Prostate gland (tissue), 2 donors: ENCODE measurements at regions of chr1 and their contacts with region 1.

Region 1: DNA sequence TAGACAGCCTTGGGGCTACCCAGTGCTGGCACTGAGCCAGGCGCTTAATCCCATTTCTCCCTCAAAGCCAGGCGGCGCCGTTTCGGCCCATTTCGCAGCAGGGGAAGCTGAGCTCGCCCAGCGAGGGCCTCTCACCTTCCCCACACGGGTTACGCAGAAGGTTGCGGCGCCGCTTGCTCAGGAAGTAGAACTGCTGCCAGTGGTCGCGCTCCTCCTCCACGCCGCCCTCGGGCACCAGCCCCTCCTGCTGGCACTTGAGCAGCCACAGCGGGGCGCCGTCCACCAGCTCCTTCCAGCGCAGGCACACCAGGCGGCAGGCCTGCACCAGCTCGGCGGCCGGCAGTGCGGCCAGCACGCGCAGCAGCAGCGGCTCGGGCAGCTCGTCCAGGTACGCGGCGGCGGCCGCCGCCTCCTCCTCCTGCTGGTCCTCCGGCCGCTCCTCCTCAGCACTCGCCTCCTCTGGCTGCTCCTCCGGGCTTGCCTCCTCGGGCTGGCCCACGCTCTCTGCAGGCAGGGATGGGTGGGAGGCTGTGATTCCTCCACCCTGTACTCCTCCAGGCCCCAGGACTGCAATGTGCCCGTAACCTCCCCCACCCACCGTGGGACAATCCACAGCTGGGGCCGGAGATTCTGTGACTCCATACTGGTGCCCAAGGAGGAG is 3.8 kb downstream of the FBXO2 start:
- DNase-seq: peak; percentile 66
- H3K4me3 ChIP-seq: no peak overlapping the region
- H3K27ac ChIP-seq: no peak overlapping the region
- H3K4me1 ChIP-seq: peaks cover 5% of the 10 kb centered on the region
- H3K27me3 ChIP-seq: no peaks in the 10 kb centered on the region
- CTCF ChIP-seq: peak; percentile 27 to 85 (median 72)
- POLR2A ChIP-seq: no peak

Region 2: DNA sequence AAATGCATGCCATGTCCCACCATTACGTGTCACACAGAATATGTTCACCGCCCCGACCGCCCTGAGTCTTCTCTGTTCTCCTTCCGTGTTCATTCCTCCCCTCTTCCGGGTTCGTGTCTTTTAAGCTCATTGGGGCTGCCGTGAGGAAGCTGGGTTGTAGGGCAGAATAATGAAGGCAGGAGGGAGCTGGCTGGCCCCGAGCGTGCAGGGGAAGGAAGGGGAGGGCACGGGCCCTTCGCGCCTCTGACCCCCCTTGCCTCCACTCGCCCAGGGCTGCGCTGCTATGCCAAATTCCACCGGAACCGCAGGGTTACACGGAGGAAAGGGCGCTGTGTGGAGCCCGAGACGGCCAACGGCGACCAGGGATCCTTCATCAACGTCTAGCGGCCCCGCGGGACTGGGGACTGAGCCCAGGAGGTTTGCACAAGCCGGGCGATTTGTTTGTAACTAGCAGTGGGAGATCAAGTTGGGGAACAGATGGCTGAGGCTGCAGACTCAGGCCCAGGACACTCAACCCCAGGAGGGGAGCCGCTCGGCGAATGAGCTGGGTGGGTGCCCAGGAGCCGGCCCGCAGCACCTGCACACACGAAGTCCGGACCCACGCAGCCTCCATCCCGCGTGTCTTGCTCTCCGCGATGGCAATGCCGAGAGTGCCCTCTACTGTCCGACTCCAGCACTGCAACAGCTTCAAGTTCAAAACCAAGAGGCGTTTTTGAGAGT is 69.0 kb after region 1 on chr1:
- intact Hi-C with region 1: loop called (anchors 5 kb)
- DNase-seq: peak; percentile 76
- H3K4me3 ChIP-seq: peak overlapping the region; percentile 18 to 31
- H3K27ac ChIP-seq: peak overlapping the region; percentile 29 to 31
- H3K4me1 ChIP-seq: no peaks in the 10 kb centered on the region
- H3K27me3 ChIP-seq: no peaks in the 10 kb centered on the region
- CTCF ChIP-seq: peak; percentile 80 to 88 (median 84)
- POLR2A ChIP-seq: peak; percentile 4

Region 3: GRCh38 chr1:11802973-11803885 is 152.8 kb after region 1 on chr1:
- intact Hi-C with region 1: loop called (anchors 5 kb)
- DNase-seq: peak; percentile 86
- H3K4me3 ChIP-seq: peak overlapping the region; percentile 28 to 38
- H3K27ac ChIP-seq: peak overlapping the region; percentile 90 to 97
- H3K4me1 ChIP-seq: peaks cover 22% of the 10 kb centered on the region
- H3K27me3 ChIP-seq: no peaks in the 10 kb centered on the region
- CTCF ChIP-seq: peak in 1 of 4 experiments; percentile 5
- POLR2A ChIP-seq: peak; percentile 91